ENCODE measurements at regions of chr2 and their contacts with region 1.

Region 1: GRCh38 chr2:41869542-41870264 is 178.1 kb upstream of the PKDCC start:
- DNase-seq: peak; percentile 33 to 93
- H3K4me3 ChIP-seq: no peak overlapping the region
- H3K27ac ChIP-seq: no peak overlapping the region
- H3K4me1 ChIP-seq: peaks cover 4 to 18% (median 8%) of the 10 kb centered on the region in 4 experiments; a peak in 6 of 7 replicates
- H3K27me3 ChIP-seq: no peaks in the 10 kb centered on the region
- CTCF ChIP-seq: peak; percentile 87 to 94 (median 90)
- EP300 ChIP-seq: no peak
- POLR2A ChIP-seq: no peak
- RAD21 ChIP-seq: peak; percentile 98 to 99

Region 2: DNA sequence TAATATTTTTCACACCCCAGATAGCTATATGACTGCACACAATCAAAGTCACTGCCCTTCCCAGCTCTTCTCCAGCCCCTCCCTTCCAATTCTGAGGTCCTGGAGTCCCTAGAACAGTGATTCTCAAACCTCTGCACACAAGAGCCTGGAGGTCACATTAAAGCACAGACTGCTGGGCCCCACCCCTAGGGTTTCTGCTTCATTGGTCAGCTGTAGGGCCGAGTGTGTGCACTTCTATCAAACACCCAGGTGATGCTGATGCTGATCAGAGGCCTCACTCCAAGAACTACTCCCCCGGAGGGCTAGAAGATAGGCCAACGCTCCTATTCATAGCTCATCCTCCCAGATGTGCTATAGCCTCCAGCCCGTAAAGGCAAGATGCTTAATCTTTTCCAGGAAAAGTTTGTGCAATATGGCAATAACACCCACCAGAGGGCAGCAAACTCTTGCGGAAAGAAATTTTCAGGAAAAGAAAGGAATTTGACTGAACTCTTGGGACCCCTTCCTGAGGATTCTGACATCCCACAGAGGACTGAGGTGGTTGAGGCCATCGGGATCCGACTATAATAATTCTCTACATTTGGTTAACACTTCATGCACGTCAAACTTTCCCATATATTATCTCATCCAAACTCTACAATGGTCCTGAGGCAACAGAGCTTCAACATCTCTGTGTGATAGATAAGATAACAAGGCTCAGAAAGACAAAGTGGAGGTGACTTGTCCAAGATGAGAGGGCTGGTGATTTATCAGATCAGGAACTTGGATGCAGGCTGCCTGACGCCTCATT is 16.1 kb before region 1 on chr2:
- CTCF ChIA-PET with region 1: interaction called, 280 read pairs
- POLR2A ChIA-PET with region 1: no interaction called
- DNase-seq: peak; percentile 21 to 79
- H3K4me3 ChIP-seq: no peak overlapping the region
- H3K27ac ChIP-seq: no peak overlapping the region
- H3K4me1 ChIP-seq: peaks cover 0 to 3% (median 0%) of the 10 kb centered on the region in 4 experiments; a peak in 2 of 7 replicates
- H3K27me3 ChIP-seq: no peaks in the 10 kb centered on the region
- CTCF ChIP-seq: peak in 2 of 3 experiments; percentile 73 to 76; a peak in 3 of 4 replicates
- EP300 ChIP-seq: no peak
- POLR2A ChIP-seq: no peak
- RAD21 ChIP-seq: peak; percentile 92 to 97

Region 3: GRCh38 chr2:41907771-41908207 is 38.1 kb after region 1 on chr2:
- CTCF ChIA-PET with region 1: interaction called, 64 read pairs
- POLR2A ChIA-PET with region 1: no interaction called
- DNase-seq: no peak
- H3K4me3 ChIP-seq: no peak overlapping the region
- H3K27ac ChIP-seq: no peak overlapping the region
- H3K4me1 ChIP-seq: no peaks in the 10 kb centered on the region
- H3K27me3 ChIP-seq: no peaks in the 10 kb centered on the region
- CTCF ChIP-seq: no peak
- EP300 ChIP-seq: no peak
- POLR2A ChIP-seq: no peak
- RAD21 ChIP-seq: no peak

Region 4: DNA sequence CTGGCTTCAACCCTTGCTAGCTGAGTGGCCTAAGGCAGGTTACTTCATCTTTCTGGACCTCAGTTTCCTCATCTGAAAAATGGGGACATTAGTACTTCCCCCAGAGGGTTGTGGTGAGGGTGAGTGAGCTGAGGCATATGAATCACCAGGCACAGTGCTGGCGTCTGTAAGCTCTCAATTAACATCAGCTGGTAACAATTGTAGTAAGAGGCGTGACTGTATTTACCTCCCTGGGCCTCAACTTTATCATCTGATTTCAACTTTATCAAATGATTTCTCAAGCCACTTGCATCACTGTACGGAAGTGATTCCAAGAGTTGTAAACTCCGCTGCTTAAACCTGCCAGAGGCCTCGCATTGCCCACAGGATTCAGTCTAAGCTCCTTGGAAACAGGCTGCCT is 124.5 kb after region 1 on chr2:
- CTCF ChIA-PET with region 1: interaction called, 10 read pairs
- POLR2A ChIA-PET with region 1: no interaction called
- DNase-seq: no peak
- H3K4me3 ChIP-seq: no peak overlapping the region
- H3K27ac ChIP-seq: no peak overlapping the region
- H3K4me1 ChIP-seq: peaks cover 0 to 3% (median 0%) of the 10 kb centered on the region in 4 experiments; a peak in 1 of 7 replicates
- H3K27me3 ChIP-seq: no peaks in the 10 kb centered on the region
- CTCF ChIP-seq: no peak
- EP300 ChIP-seq: no peak
- POLR2A ChIP-seq: no peak
- RAD21 ChIP-seq: no peak

Region 5: DNA sequence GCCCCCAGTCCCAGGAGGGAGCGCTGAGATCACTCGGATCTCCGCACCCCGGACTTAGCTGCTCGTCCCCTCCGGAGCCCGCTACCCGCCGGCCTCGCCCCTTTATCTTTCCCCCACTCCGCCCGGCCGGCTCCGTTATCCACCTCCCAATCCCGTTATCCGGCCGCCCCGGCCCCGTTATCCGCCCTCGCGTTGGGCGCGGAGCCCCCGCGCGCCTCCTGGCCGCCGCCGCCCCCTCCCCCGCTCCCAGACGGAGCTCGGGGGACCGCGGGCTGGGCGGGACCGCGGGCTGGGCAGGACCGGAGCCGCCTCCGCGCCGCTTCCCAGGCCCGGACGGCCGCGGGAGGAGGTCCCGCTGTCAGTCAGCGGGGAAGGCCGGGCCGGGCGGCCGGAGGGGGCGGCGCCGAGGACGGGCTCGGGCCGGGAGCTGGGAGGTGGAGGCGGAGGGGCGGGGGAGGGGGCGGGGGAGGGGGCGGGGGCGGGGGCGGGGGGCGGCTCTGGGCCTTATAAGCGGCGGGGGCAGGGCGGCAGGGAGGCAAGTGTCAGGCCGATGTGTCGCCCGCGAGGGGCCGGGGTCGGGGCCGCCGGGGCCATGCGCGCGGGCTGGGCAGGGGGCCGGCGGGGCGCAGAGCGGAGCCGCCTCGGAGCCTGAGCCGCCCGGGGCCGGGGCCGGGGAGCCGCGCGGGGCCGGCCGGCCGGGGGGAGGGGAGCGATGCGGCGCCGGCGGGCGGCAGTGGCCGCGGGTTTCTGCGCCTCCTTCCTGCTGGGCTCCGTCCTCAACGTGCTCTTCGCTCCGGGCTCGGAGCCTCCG is 178.0 kb after region 1 on chr2 and contains the start of gene PKDCC:
- CTCF ChIA-PET with region 1: interaction called, 177 read pairs
- POLR2A ChIA-PET with region 1: interaction called, 6 read pairs
- DNase-seq: peak in 1 of 2 experiments; percentile 88
- H3K4me3 ChIP-seq: peak within 1 kb of the TSS; percentile 74 to 95 (median 80)
- H3K27ac ChIP-seq: peak within 1 kb of the TSS; percentile 86
- H3K4me1 ChIP-seq: peaks cover 16 to 50% (median 37%) of the 10 kb centered on the region in 4 experiments
- H3K27me3 ChIP-seq: peaks cover 0 to 12% (median 10%) of the 10 kb centered on the region in 4 experiments; a peak in 5 of 7 replicates
- CTCF ChIP-seq: no peak
- EP300 ChIP-seq: no peak; a peak in 1 of 3 replicates
- POLR2A ChIP-seq: no peak
- RAD21 ChIP-seq: no peak
- total RNA-seq, gene PKDCC: 48.0 and 49.9 TPM in 2 replicates